Activated CD8-positive, alpha-beta memory T cell treated with anti-CD3 and anti-CD28 coated beads, Interleukin-2, amount 10 ng/mL, durations not matched to agents 7 days and 5 days (primary cell): ENCODE measurements at regions of chr14 and their contacts with region 1.

Region 1: GRCh38 chr14:51780006-51780692 is 80.3 kb upstream of the GNG2 start:
- DNase-seq: peak; percentile 81
- ATAC-seq: peak; percentile 71
- H3K4me3 Mint-ChIP-seq: no peak overlapping the region
- H3K27ac Mint-ChIP-seq: no peak overlapping the region
- H3K4me1 Mint-ChIP-seq: peaks cover 10% of the 10 kb centered on the region
- H3K27me3 Mint-ChIP-seq: peaks cover 49% of the 10 kb centered on the region

Region 2: DNA sequence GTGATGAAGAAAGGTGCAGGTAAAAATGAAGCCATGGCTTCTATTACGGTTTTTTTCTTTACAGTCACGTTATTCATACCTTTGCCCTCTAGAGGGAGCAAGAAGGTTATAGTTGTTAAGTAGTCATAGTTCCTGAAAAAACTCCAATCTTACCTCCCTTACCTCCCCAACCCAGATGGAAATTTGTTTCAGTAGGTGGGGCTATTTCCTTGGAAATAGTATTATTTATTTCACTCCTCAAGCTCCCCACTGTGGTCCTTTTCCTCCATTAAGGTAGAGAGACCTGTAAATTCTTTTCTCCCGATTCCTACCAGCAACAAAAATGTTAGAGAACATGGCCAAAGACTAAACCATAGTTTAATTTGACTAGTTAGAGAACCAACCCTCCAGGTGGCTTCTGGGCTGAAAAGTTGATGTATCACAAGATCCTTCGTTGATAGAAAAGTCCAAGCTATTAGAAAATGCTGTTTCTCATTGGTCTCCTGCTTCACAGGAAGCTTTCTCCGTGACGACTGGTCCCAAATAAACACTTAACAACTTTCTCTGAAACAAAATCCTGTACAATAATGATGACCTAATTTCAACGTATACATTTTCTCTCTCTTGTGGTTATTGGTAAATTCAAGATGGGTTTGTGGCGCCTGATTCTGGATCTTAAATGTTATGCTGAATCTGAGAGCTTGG is 496.6 kb before region 1 on chr14:
- CTCF ChIA-PET with region 1: interaction called, 26 read pairs
- DNase-seq: no peak
- ATAC-seq: no peak
- H3K4me3 Mint-ChIP-seq: no peak overlapping the region
- H3K27ac Mint-ChIP-seq: no peak overlapping the region
- H3K4me1 Mint-ChIP-seq: peaks cover 2% of the 10 kb centered on the region
- H3K27me3 Mint-ChIP-seq: no peaks in the 10 kb centered on the region

Region 3: GRCh38 chr14:51651388-51652167 is 128.6 kb before region 1 on chr14 and contains the start of gene FRMD6:
- CTCF ChIA-PET with region 1: interaction called, 12 read pairs
- DNase-seq: peak; percentile 90
- ATAC-seq: peak; percentile 84
- H3K4me3 Mint-ChIP-seq: peak within 1 kb of the TSS; percentile 79
- H3K27ac Mint-ChIP-seq: peak within 1 kb of the TSS; percentile 77
- H3K4me1 Mint-ChIP-seq: peaks cover 22% of the 10 kb centered on the region
- H3K27me3 Mint-ChIP-seq: peaks cover 35% of the 10 kb centered on the region
- total RNA-seq, gene FRMD6: 2.1 to 2.5 TPM

Region 4: GRCh38 chr14:51979088-51979709 is 199.1 kb after region 1 on chr14:
- CTCF ChIA-PET with region 1: interaction called, 11 read pairs
- DNase-seq: peak; percentile 87
- ATAC-seq: peak; percentile 74
- H3K4me3 Mint-ChIP-seq: no peak overlapping the region
- H3K27ac Mint-ChIP-seq: no peak overlapping the region
- H3K4me1 Mint-ChIP-seq: peaks cover 23% of the 10 kb centered on the region
- H3K27me3 Mint-ChIP-seq: no peaks in the 10 kb centered on the region